ENCODE measurements at regions of chr7 and their contacts with region 1.

Region 1: GRCh38 chr7:100396421-100396982 is 23.2 kb downstream of the PILRA start:
- DNase-seq: peak; percentile 58
- H3K4me3 Mint-ChIP-seq: no peak overlapping the region
- H3K27ac Mint-ChIP-seq: peak overlapping the region; percentile 23
- H3K4me1 Mint-ChIP-seq: peaks cover 25% of the 10 kb centered on the region
- H3K27me3 Mint-ChIP-seq: peaks cover 35% of the 10 kb centered on the region

Region 2: GRCh38 chr7:100342765-100343164 is 53.7 kb before region 1 on chr7:
- intact Hi-C with region 1: loop called (anchors 5 kb)
- DNase-seq: no peak
- H3K4me3 Mint-ChIP-seq: no peak overlapping the region
- H3K27ac Mint-ChIP-seq: peak overlapping the region; percentile 46
- H3K4me1 Mint-ChIP-seq: peaks cover 25% of the 10 kb centered on the region
- H3K27me3 Mint-ChIP-seq: no peaks in the 10 kb centered on the region

Region 3: GRCh38 chr7:100369105-100369504 is 27.4 kb before region 1 on chr7:
- intact Hi-C with region 1: loop called (anchors 1 kb)
- DNase-seq: no peak
- H3K4me3 Mint-ChIP-seq: no peak overlapping the region
- H3K27ac Mint-ChIP-seq: no peak overlapping the region
- H3K4me1 Mint-ChIP-seq: peaks cover 28% of the 10 kb centered on the region
- H3K27me3 Mint-ChIP-seq: no peaks in the 10 kb centered on the region

Measured in activated T-helper 2 cell treated with anti-CD3 and anti-CD28 coated beads, Interferon-gamma antibody, Interleukin-2, Interleukin-4, amounts not matched to agents 10 μg/mL and 5 μg/mL and 100 μg/mL, durations not matched to agents 14 hours and 24 hours and 36 hours (primary cell).